ENCODE measurements at regions of chr20 and their contacts with region 1.

Region 1: DNA sequence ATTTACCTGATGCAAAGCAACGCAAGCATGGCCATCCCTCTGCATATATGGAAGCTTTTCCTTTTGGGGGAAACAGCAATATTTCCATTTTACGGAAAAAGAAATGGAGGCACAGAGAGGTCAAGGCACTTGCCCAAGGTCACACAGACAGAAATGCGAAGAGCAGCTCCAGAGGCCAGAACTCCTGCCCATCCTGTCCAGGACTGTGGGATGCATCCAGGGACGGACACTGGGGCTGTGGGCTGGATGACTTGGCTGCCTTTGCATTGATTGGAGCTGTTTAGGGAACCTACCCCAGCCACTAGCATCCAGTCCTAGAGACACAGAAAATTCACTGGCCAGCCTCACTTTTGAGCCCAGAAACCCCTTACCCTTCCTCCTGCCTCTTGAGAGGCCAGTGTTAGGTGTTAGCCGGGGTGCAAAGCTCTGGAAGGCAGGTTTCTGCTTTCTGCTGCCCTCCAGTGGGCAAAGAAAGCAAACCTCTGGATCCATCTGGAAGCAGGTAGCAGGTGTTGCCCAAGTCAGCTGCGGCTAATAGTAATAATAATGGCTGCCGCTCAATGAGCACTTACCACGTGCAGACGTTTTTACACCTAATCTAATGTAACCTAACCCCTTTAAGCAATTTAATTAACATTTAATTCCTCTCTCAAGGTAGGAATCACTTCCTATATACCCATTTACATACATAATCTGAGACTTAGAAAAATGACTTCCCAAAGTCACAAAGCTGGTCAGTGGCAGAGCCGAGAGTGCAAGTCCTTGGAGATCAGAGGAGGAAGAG is 31.7 kb upstream of the CCN5 start:
- DNase-seq: peak; percentile 66 to 76
- H3K4me3 ChIP-seq: no peak overlapping the region
- H3K27ac ChIP-seq: no peak overlapping the region
- H3K4me1 ChIP-seq: peaks cover 16% of the 10 kb centered on the region
- H3K27me3 ChIP-seq: no peaks in the 10 kb centered on the region
- CTCF ChIP-seq: peak; percentile 85

Region 2: GRCh38 chr20:44388466-44389023 is 294.9 kb before region 1 on chr20:
- CTCF ChIA-PET with region 1: interaction called, 3 read pairs
- POLR2A ChIA-PET with region 1: no interaction called
- intact Hi-C with region 1: loop called (anchors 5 kb)
- DNase-seq: peak; percentile 68 to 73
- H3K4me3 ChIP-seq: no peak overlapping the region
- H3K27ac ChIP-seq: no peak overlapping the region
- H3K4me1 ChIP-seq: no peaks in the 10 kb centered on the region; the same call in 1 of the 2 replicates
- H3K27me3 ChIP-seq: no peaks in the 10 kb centered on the region
- CTCF ChIP-seq: peak; percentile 95

Region 3: GRCh38 chr20:44495802-44496481 is 187.5 kb before region 1 on chr20:
- CTCF ChIA-PET with region 1: interaction called, 14 read pairs
- POLR2A ChIA-PET with region 1: no interaction called
- intact Hi-C with region 1: no loop called
- DNase-seq: peak; percentile 22 to 97
- H3K4me3 ChIP-seq: no peak overlapping the region; the same call in 1 of the 2 replicates
- H3K27ac ChIP-seq: peak overlapping the region; percentile 97
- H3K4me1 ChIP-seq: peaks cover 42% of the 10 kb centered on the region
- H3K27me3 ChIP-seq: no peaks in the 10 kb centered on the region
- CTCF ChIP-seq: no peak

Region 4: GRCh38 chr20:44609511-44610312 is 73.7 kb before region 1 on chr20:
- CTCF ChIA-PET with region 1: interaction called, 3 read pairs
- POLR2A ChIA-PET with region 1: no interaction called
- intact Hi-C with region 1: loop called (anchors 1 kb)
- DNase-seq: peak; percentile 85 to 91
- H3K4me3 ChIP-seq: no peak overlapping the region
- H3K27ac ChIP-seq: 0 out of 2 replicates have a peak overlapping the region, but pooled peaks have one; percentile 0
- H3K4me1 ChIP-seq: peaks cover 7% of the 10 kb centered on the region
- H3K27me3 ChIP-seq: no peaks in the 10 kb centered on the region
- CTCF ChIP-seq: peak; percentile 99

Region 5: GRCh38 chr20:44733341-44734069 is 50.0 kb after region 1 on chr20:
- CTCF ChIA-PET with region 1: interaction called, 38 read pairs
- POLR2A ChIA-PET with region 1: interaction called, 5 read pairs
- intact Hi-C with region 1: loop called (anchors 1 kb)
- DNase-seq: peak; percentile 55 to 78
- H3K4me3 ChIP-seq: no peak overlapping the region
- H3K27ac ChIP-seq: no peak overlapping the region
- H3K4me1 ChIP-seq: peaks cover 45% of the 10 kb centered on the region
- H3K27me3 ChIP-seq: no peaks in the 10 kb centered on the region
- CTCF ChIP-seq: peak; percentile 96

Region 6: GRCh38 chr20:44805979-44806620 is 122.6 kb after region 1 on chr20:
- CTCF ChIA-PET with region 1: no interaction called
- POLR2A ChIA-PET with region 1: no interaction called
- intact Hi-C with region 1: no loop called
- DNase-seq: no peak
- H3K4me3 ChIP-seq: no peak overlapping the region
- H3K27ac ChIP-seq: no peak overlapping the region
- H3K4me1 ChIP-seq: no peaks in the 10 kb centered on the region
- H3K27me3 ChIP-seq: peaks cover 80% of the 10 kb centered on the region
- CTCF ChIP-seq: no peak

Region 7: GRCh38 chr20:44866703-44867335 is 183.4 kb after region 1 on chr20:
- CTCF ChIA-PET with region 1: no interaction called
- POLR2A ChIA-PET with region 1: no interaction called
- intact Hi-C with region 1: loop called (anchors 1 kb)
- DNase-seq: no peak
- H3K4me3 ChIP-seq: no peak overlapping the region
- H3K27ac ChIP-seq: no peak overlapping the region
- H3K4me1 ChIP-seq: no peaks in the 10 kb centered on the region
- H3K27me3 ChIP-seq: 0 out of 2 replicates have a peak, but pooled peaks cover 17% of the 10 kb centered on the region
- CTCF ChIP-seq: no peak